Motor neuron (in vitro differentiated cells): ENCODE measurements at regions of chr10 and their contacts with region 1.

Region 1: DNA sequence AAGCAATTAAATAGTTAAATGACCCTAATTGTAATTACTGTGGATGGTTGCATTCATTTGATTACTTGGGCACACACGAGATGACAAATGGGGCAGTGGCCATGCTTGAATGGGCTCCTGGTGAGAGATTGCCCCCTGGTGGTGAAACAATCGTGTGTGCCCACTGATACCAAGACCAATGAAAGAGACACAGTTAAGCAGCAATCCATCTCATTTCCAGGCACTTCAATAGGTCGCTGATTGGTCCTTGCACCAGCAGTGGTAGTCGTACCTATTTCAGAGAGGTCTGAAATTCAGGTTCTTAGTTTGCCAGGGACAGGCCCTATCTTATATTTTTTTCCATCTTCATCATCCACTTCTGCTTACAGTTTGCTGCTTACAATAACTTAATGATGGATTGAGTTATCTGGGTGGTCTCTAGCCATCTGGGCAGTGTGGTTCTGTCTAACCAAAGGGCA is 8.3 kb downstream of the PCBD1 start:
- ATAC-seq: peak; percentile 67 to 95 (median 84)
- H3K4me3 ChIP-seq: no peak overlapping the region
- H3K27ac ChIP-seq: no peak overlapping the region
- H3K4me1 ChIP-seq: no peaks in the 10 kb centered on the region

Region 2: GRCh38 chr10:70758757-70759514 is 121.2 kb before region 1 on chr10:
- in situ Hi-C with region 1: loop called in 1 of 9 experiments (anchors 25 kb)
- ATAC-seq: peak; percentile 22 to 80 (median 43)
- H3K4me3 ChIP-seq: no peak overlapping the region
- H3K27ac ChIP-seq: no peak overlapping the region
- H3K4me1 ChIP-seq: peaks cover 14 to 34% of the 10 kb centered on the region in 2 donors

Region 3: GRCh38 chr10:70815504-70816219 is 64.4 kb before region 1 on chr10 and contains the start of gene SGPL1:
- in situ Hi-C with region 1: loop called in 1 of 9 experiments (anchors 10 kb)
- ATAC-seq: peak; percentile 73 to 84 (median 77)
- H3K4me3 ChIP-seq: peak within 1 kb of the TSS; percentile 44 to 83 (median 76)
- H3K27ac ChIP-seq: peak within 1 kb of the TSS; percentile 65 to 90
- H3K4me1 ChIP-seq: peaks cover 3 to 5% of the 10 kb centered on the region in 2 donors
- total RNA-seq, gene SGPL1: 16.3 to 54.6 (median 24.6) TPM